ENCODE measurements at regions of chr10 and their contacts with region 1.

Region 1: DNA sequence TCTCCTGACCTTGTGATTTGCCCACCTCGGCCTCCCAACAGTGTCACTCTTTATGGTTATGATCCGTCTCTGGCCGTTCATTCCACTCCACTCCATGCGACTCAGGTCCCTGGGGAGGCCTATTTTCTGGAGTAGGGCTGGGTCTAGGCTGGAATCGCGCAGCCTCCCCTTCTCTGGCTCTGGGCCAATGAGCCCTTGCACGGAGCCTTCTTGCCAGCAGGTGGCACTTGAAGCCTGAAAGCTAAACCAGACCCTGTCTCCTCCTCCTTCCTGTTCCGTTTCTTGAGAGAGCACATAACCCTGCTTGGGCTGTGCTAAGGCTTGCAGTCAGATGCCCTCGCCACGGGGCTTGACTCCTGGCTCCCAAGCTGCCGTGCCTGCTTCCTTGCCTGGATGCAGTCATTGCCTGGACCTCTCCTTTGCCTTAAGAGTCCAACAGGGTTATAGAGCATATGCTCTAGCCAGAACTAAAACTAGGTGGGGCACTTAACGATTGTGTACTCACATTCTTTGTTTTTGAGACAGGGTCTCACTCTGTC is 9.6 kb upstream of the DNAJB12 start:
- DNase-seq: peak; percentile 91
- H3K4me3 Mint-ChIP-seq: no peak overlapping the region
- H3K27ac Mint-ChIP-seq: no peak overlapping the region
- H3K4me1 Mint-ChIP-seq: peaks cover 14% of the 10 kb centered on the region
- H3K27me3 Mint-ChIP-seq: no peaks in the 10 kb centered on the region

Region 2: DNA sequence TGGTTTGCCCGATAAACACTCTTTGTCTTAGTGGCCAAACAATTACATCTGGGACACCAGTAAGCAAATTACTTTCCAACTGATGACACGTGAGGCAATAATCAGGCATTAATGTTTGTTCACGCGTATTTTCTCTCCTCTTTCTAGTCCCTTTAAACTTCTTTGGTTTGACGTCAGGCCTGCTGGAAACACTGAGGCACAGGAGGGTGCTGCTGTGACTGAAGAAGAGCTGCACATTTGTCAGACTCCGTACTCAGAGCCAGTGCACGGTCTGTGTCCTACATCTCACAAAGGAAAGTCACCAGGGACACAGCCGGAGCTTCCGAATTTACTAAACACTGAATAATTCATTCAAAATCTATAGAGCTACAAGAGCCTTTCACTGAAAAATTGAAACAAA is 206.1 kb before region 1 on chr10:
- CTCF ChIA-PET with region 1: no interaction called
- POLR2A ChIA-PET with region 1: no interaction called
- intact Hi-C with region 1: no loop called
- DNase-seq: no peak
- H3K4me3 Mint-ChIP-seq: no peak overlapping the region
- H3K27ac Mint-ChIP-seq: no peak overlapping the region
- H3K4me1 Mint-ChIP-seq: peaks cover 12% of the 10 kb centered on the region
- H3K27me3 Mint-ChIP-seq: no peaks in the 10 kb centered on the region

Region 3: GRCh38 chr10:72567884-72568640 is 203.8 kb after region 1 on chr10:
- CTCF ChIA-PET with region 1: interaction called, 3 read pairs
- POLR2A ChIA-PET with region 1: no interaction called
- intact Hi-C with region 1: loop called (anchors 2 kb)
- DNase-seq: no peak
- H3K4me3 Mint-ChIP-seq: no peak overlapping the region
- H3K27ac Mint-ChIP-seq: no peak overlapping the region
- H3K4me1 Mint-ChIP-seq: peaks cover 16% of the 10 kb centered on the region
- H3K27me3 Mint-ChIP-seq: no peaks in the 10 kb centered on the region

Region 4: DNA sequence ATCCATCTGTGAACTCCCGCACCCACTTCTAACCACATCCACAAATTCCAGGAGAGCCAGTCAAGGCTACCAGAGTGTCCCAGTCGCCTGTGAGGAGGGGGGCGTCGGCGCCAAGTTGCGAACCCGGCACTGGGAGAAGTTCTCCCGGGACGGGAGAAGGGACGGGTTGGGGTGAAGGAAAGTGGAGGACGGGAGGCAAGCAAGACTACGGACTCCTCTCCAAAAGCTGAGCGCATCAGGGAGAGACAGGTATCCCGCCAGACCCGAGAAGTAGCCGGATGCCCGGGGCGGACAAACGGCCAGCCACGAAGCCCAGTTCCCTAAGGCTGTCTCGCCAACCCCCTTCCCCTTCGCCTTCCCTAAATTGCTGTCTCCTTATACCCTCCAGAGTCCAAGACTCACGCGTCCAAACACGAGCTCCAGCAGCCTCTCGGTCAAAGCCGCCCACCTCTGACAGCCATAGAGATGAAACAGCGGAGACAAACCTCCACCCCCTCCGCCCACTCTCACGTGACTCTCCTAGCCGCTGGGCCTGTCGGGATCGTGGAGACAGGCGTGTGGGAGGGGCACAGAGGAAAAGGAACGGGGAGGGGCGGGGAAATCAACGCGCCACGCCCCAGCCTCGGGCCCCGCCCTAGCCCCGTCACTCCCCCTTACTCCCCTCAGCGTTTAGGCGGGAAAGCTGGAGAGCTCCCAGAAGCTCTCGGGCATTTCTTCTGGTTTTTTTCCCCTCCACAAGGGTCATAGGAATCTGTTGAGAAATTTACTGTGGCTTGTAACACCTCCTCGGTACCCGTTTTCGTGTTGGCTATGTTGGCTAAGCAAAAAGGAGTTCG is 261.5 kb after region 1 on chr10 and contains the start of gene MICU1:
- CTCF ChIA-PET with region 1: no interaction called
- POLR2A ChIA-PET with region 1: no interaction called
- intact Hi-C with region 1: loop called (anchors 10 kb)
- DNase-seq: peak; percentile 97
- H3K4me3 Mint-ChIP-seq: peak within 1 kb of the TSS; percentile 97
- H3K27ac Mint-ChIP-seq: peak within 1 kb of the TSS; percentile 86
- H3K4me1 Mint-ChIP-seq: peaks cover 10% of the 10 kb centered on the region
- H3K27me3 Mint-ChIP-seq: no peaks in the 10 kb centered on the region
- total RNA-seq, gene MICU1: 41.2 to 41.7 TPM

Region 5: GRCh38 chr10:72834183-72834825 is 470.0 kb after region 1 on chr10:
- CTCF ChIA-PET with region 1: interaction called, 52 read pairs
- POLR2A ChIA-PET with region 1: interaction called, 4 read pairs
- intact Hi-C with region 1: loop called (anchors 1 kb)
- DNase-seq: peak; percentile 34
- H3K4me3 Mint-ChIP-seq: no peak overlapping the region
- H3K27ac Mint-ChIP-seq: no peak overlapping the region
- H3K4me1 Mint-ChIP-seq: no peaks in the 10 kb centered on the region
- H3K27me3 Mint-ChIP-seq: no peaks in the 10 kb centered on the region

Region 6: GRCh38 chr10:72875250-72876055 is 511.1 kb after region 1 on chr10:
- CTCF ChIA-PET with region 1: interaction called, 17 read pairs
- POLR2A ChIA-PET with region 1: no interaction called
- intact Hi-C with region 1: loop called (anchors 1 kb)
- DNase-seq: no peak
- H3K4me3 Mint-ChIP-seq: no peak overlapping the region
- H3K27ac Mint-ChIP-seq: no peak overlapping the region
- H3K4me1 Mint-ChIP-seq: no peaks in the 10 kb centered on the region
- H3K27me3 Mint-ChIP-seq: no peaks in the 10 kb centered on the region

Region 7: DNA sequence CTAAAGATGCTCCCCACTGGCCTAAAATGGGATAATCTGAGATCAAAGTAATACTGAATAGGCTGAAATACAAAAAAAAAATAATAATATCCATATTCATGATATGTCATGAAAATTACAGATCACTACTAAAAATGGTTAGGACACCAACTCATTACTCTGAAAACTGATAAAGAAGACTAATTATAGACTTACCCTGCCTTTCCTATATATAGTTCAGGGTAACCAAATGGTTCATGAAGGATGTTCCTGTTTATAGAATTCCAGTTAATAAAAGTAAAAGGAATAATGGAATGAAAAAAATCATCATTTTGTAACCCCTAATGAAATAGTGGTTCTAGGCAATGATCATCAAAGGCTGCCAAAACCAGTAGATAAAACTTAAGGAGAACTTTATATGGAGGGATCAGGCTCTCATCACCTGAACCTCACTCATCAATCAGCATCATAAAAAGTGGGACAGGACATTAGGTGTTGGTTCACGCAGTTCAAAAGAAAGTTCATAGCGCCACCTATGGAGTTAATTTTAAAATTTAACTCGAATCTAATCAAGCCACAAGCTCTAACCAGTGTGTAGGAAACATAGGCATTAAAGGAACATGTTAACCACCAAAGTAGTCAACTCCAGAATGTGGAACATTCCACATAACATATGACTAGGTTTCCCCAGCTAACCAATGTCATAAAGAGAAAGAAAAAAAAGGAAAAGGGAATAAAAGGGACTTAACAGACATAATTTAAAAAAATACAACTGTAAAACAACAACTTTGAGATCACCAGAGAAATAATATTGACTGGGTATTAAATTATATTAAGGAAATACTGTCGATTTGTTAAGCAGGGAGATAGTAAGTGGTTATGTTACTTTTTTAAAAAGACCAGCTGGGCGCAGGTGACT is 696.7 kb after region 1 on chr10:
- CTCF ChIA-PET with region 1: interaction called, 10 read pairs
- POLR2A ChIA-PET with region 1: no interaction called
- intact Hi-C with region 1: loop called (anchors 1 kb)
- DNase-seq: no peak
- H3K4me3 Mint-ChIP-seq: no peak overlapping the region
- H3K27ac Mint-ChIP-seq: no peak overlapping the region
- H3K4me1 Mint-ChIP-seq: peaks cover 10% of the 10 kb centered on the region
- H3K27me3 Mint-ChIP-seq: no peaks in the 10 kb centered on the region

Region 8: DNA sequence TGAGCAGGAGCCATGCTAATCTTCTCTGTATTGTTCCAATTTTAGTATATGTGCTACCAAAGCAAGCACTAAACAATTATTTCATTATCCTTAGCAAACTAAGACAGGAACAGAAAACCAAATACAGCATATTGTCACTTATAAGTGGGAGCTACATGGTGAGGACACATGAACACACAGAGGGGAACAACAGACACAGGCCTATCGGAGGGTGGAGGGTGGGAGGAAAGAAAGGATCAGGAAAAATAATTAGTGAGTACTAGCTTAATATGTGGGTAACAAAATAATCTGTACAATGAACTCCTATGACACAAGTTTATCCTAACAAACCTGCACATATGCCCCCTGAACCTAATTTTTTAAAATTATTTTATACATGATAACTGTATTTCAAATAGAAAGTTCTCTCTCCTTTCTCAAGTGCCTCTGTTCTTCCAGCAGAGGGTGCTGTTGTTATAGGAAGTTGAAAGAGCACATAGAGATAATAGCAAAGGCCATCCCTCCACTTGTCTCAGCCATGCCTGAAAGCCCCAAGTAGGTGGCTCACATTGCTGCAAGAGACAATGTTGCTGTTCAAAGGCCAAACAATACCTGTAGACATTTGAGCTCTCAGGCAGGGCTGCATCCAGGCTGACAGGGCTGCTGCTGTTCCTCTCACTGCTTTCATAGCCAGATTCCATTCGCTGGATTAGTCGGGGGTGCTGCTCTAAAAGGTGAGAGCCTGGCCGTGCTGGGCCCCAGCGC is 1165.0 kb after region 1 on chr10:
- CTCF ChIA-PET with region 1: no interaction called
- POLR2A ChIA-PET with region 1: no interaction called
- intact Hi-C with region 1: loop called (anchors 5 kb)
- DNase-seq: peak; percentile 44
- H3K4me3 Mint-ChIP-seq: no peak overlapping the region
- H3K27ac Mint-ChIP-seq: no peak overlapping the region
- H3K4me1 Mint-ChIP-seq: no peaks in the 10 kb centered on the region
- H3K27me3 Mint-ChIP-seq: no peaks in the 10 kb centered on the region

Measured in activated CD4-positive, alpha-beta memory T cell treated with anti-CD3 and anti-CD28 coated beads for 36 hours (primary cell).